ENCODE measurements at regions of chr19 and their contacts with region 1.

Region 1: DNA sequence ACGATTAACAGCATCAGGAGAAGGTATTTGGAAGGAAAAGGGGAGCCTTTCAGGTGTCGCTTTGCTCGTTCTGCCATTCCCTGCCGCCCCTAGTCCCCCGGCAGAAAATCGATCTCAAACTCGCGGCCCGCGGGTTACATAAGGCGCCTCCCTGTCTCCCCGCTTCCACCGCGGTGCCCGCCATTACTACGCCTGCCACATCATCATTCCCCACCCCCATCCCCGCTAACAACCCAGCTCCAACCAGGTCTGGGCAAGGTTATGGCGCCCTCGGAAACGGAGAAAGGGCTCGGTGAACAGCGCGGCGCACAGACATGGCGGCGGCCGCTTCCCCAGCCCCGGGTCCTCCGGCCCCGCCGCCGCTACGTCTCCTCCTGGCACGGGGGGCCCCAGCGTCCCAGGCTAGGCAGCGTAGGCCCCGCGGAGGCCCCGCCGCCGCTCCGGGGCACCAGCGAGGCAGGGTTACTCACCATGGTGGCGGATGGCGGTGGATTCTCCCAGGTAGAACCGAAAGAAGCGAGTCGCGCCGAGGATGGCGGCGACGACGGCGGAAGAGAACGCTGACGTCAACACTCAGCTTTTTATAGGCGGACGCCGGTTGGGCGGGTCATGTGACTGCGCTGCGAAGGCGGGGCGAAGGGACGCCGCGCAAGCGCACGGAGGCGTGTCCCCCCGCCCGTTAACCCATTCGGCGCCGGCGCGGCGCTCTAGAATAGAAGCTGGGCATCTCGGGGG is at the start of gene EEF2:
- DNase-seq: peak; percentile 91
- H3K4me3 ChIP-seq: peak within 1 kb of the TSS; percentile 98
- H3K27ac ChIP-seq: peak within 1 kb of the TSS; percentile 96
- H3K4me1 ChIP-seq: peaks cover 36% of the 10 kb centered on the region
- H3K27me3 ChIP-seq: no peaks in the 10 kb centered on the region
- CTCF ChIP-seq: no peak
- total RNA-seq, gene EEF2: 2,701 and 2,706 TPM in 2 replicates

Region 2: DNA sequence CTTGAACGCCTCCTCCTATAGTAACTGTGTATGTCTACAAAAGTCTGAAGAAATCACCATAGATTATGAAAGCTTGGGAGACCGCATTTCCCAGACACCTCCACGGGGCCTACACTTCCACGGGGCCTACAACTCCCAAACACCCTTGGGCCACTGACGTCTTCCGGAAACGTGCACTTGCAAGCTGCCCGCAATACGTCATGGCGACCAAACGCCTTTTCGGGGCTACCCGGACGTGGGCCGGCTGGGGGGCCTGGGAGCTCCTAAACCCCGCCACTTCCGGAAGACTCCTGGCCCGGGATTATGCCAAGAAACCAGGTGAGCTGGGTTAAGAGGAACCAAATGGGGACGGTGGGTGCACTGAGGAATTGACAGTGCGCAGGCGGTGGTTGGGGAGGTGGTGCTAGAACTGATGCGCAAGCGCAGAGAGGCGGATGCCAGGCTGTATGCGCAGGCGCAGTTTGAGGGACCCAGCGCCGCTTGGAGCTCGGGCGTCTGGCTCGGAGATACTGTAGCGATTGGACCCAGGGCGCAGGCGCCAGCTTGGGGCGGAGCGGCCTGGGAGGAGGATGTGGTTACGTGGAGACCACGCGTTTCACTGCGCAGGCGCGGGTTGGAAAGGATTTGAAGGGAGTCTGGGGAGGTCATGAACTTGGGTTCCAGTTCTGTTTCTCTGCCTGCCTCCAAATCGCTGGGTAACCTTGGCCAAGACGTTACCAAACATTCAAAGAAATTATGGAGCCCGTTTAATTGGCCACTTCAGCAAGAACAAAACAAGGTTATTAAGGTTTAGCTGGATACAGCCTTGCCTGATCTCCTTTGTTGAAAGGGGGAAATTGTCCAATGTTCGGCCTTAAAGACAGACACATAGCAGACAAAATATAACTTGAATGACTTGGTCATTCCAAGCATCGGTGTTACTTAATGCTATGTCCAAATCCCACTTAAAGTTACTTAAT is 222.3 kb before region 1 on chr19 and contains the start of gene MRPL54:
- CTCF ChIA-PET with region 1: interaction called, 13 read pairs
- POLR2A ChIA-PET with region 1: interaction called, 29 read pairs
- intact Hi-C with region 1: no loop called
- DNase-seq: peak; percentile 99
- H3K4me3 ChIP-seq: peak within 1 kb of the TSS; percentile 100
- H3K27ac ChIP-seq: peak within 1 kb of the TSS; percentile 96
- H3K4me1 ChIP-seq: peaks cover 10% of the 10 kb centered on the region
- H3K27me3 ChIP-seq: no peaks in the 10 kb centered on the region
- CTCF ChIP-seq: no peak
- total RNA-seq, gene MRPL54: 47.2 and 51.3 TPM in 2 replicates

Region 3: GRCh38 chr19:3968556-3969434 is 16.3 kb before region 1 on chr19:
- CTCF ChIA-PET with region 1: interaction called, 10 read pairs
- POLR2A ChIA-PET with region 1: interaction called, 8 read pairs
- intact Hi-C with region 1: no loop called
- DNase-seq: peak; percentile 99
- H3K4me3 ChIP-seq: peak overlapping the region; percentile 93
- H3K27ac ChIP-seq: peak overlapping the region; percentile 94
- H3K4me1 ChIP-seq: peaks cover 20% of the 10 kb centered on the region
- H3K27me3 ChIP-seq: no peaks in the 10 kb centered on the region
- CTCF ChIP-seq: no peak

Region 4: DNA sequence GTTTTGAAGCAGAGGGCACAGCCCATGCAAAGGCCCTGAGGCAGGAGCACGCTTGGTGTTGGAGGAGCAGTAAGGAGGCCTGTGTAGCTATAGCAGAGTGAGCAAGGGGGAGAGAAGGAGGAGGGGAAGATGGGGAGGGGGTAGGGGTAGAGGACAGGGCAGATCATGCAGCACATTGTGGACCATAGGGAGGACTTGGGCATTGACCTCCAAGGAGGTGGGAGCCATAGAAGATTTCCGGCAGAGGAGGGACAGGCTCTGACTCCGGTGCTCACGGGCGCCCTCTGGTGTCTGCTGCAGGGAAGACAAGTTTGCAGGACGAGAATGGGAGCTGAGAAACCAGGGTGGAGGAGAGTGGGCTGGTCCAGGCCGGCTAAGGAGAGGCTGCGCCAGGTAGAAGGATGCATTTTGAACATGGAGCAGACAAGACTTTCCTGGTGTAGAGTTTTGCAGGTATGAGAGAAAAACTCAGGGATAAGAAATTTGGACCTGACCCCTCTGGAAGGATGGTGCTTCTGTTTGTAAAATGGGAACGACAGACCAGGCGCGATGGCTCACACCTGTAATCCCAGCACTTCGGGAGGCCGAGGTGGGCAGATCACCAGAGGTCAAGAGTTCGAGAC is 154.7 kb after region 1 on chr19:
- CTCF ChIA-PET with region 1: interaction called, 15 read pairs
- POLR2A ChIA-PET with region 1: no interaction called
- intact Hi-C with region 1: no loop called
- DNase-seq: peak; percentile 77
- H3K4me3 ChIP-seq: no peak overlapping the region
- H3K27ac ChIP-seq: no peak overlapping the region
- H3K4me1 ChIP-seq: no peaks in the 10 kb centered on the region
- H3K27me3 ChIP-seq: peaks cover under 1% of the 10 kb centered on the region
- CTCF ChIP-seq: peak; percentile 91

Region 5: DNA sequence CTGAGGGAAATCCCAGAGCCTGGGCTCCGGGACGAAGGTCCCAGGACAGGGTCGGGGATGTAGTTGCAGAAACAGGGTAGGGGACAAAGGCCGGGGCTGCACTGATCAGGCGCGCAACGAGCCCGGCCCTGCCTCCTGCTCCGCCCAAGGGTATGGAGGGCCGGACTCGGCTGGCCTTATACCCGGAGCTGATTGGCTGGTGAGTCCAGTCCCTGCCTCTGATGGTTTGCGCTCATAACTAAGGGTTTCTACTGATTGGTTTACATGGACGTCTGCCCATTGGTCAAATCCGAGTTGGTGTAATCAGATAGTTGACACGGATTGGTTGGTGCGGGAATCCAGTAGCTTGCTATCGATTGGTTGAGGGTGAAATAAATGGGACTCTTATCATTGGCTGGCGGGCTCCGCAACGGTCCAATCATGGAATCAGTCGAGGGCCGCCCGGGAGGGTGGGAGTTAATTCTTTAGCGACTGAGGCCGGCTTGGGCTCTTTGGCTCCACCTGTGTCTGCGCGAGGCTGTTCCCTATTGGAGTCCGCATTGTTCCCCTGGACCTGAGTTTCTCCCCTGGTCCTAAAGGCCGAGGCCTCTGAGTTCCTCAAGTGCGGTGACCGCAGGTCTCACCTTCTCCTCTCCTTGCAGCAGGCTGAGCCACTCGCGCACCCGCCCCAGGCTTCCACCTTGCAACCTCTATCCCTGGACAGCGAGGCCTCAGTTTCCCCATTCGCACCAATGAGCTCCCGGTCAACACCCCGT is 357.7 kb after region 1 on chr19:
- CTCF ChIA-PET with region 1: interaction called, 6 read pairs
- POLR2A ChIA-PET with region 1: interaction called, 14 read pairs
- intact Hi-C with region 1: no loop called
- DNase-seq: peak; percentile 100
- H3K4me3 ChIP-seq: peak overlapping the region; percentile 68
- H3K27ac ChIP-seq: peak overlapping the region; percentile 91
- H3K4me1 ChIP-seq: peaks cover 8% of the 10 kb centered on the region
- H3K27me3 ChIP-seq: no peaks in the 10 kb centered on the region
- CTCF ChIP-seq: peak; percentile 39